Right cardiac atrium (tissue), 5 donors: ENCODE measurements at regions of chr14 and their contacts with region 1.

Region 1: GRCh38 chr14:58947814-58948445 is 240.5 kb upstream of the DAAM1 start:
- DNase-seq: peak in 1 of 3 donors; percentile 50
- ATAC-seq: no peak
- H3K4me3 ChIP-seq: no peak overlapping the region
- H3K27ac ChIP-seq: no peak overlapping the region
- H3K4me1 ChIP-seq: no peaks in the 10 kb centered on the region
- H3K27me3 ChIP-seq: no peaks in the 10 kb centered on the region

Region 2: DNA sequence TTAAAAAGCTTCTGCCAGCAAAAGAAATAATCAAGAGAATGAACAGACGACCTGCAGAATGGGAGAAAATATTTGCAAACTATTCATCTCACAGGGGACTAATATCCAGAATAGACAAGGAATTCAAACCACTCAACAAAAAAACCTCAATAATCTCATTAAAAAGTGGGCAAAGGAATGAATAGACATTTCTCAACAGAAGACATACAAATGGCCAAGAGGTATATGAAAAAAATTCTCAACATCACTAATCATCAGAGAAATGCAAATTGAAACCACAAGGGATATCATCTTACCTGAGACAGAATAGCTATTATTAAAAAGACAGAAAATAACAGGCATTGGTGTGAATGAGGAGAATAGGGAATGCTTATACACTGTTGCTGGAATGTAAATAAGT is 40.1 kb before region 1 on chr14:
- intact Hi-C with region 1: loop called in 1 of 4 experiments (anchors 2 kb)
- DNase-seq: no peak
- ATAC-seq: no peak
- H3K4me3 ChIP-seq: no peak overlapping the region
- H3K27ac ChIP-seq: no peak overlapping the region
- H3K4me1 ChIP-seq: no peaks in the 10 kb centered on the region
- H3K27me3 ChIP-seq: no peaks in the 10 kb centered on the region